Sigmoid colon (tissue), 7 donors: ENCODE measurements at regions of chr9 and their contacts with region 1.

Region 1: DNA sequence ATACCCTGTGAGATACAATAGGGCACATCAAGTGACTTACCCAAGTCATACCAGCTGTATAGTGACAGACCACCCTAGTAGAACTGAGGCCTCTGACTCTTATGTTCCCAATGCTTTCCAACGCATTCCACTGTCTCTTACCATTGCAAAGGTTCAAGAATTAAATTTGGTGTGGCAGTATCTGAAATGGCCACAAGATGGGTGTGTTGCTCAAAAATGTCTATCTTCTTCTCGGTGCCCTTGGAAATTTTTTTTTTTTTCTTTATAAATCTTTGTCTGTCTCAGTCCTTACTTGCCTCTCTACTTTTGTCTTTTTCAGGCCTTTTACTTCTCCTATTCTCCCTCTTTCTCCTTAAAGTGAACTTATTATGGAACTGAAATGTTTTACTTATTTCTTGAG is 48.4 kb downstream of the GPR21 start:
- DNase-seq: no peak
- H3K4me3 ChIP-seq: no peak overlapping the region
- H3K27ac ChIP-seq: no peak overlapping the region
- H3K4me1 ChIP-seq: no peaks in the 10 kb centered on the region
- H3K27me3 ChIP-seq: no peaks in the 10 kb centered on the region
- CTCF ChIP-seq: peak; percentile 8 to 43 (median 38)
- EP300 ChIP-seq: no peak
- POLR2A ChIP-seq: no peak

Region 2: GRCh38 chr9:122888480-122888879 is 193.3 kb before region 1 on chr9:
- intact Hi-C with region 1: no loop called
- DNase-seq: no peak
- H3K4me3 ChIP-seq: no peak overlapping the region
- H3K27ac ChIP-seq: no peak overlapping the region
- H3K4me1 ChIP-seq: no peaks in the 10 kb centered on the region
- H3K27me3 ChIP-seq: no peaks in the 10 kb centered on the region
- CTCF ChIP-seq: no peak
- EP300 ChIP-seq: no peak
- POLR2A ChIP-seq: no peak

Region 3: GRCh38 chr9:123011878-123012528 is 69.8 kb before region 1 on chr9:
- intact Hi-C with region 1: no loop called
- DNase-seq: no peak
- H3K4me3 ChIP-seq: no peak overlapping the region
- H3K27ac ChIP-seq: no peak overlapping the region
- H3K4me1 ChIP-seq: peaks cover 0 to 9% (median 0%) of the 10 kb centered on the region in 4 donors
- H3K27me3 ChIP-seq: no peaks in the 10 kb centered on the region
- CTCF ChIP-seq: no peak
- EP300 ChIP-seq: no peak
- POLR2A ChIP-seq: no peak

Region 4: GRCh38 chr9:123225374-123225813 is 143.6 kb after region 1 on chr9:
- intact Hi-C with region 1: loop called (anchors 10 kb)
- DNase-seq: no peak
- H3K4me3 ChIP-seq: no peak overlapping the region
- H3K27ac ChIP-seq: no peak overlapping the region
- H3K4me1 ChIP-seq: peaks cover 0 to 3% (median 2%) of the 10 kb centered on the region in 4 donors
- H3K27me3 ChIP-seq: no peaks in the 10 kb centered on the region
- CTCF ChIP-seq: peak in 2 of 4 experiments; percentile 39 to 43
- EP300 ChIP-seq: no peak
- POLR2A ChIP-seq: no peak